ENCODE measurements at regions of chr11 and their contacts with region 1.

Region 1: GRCh38 chr11:96389720-96390487 is at the starts of genes CCDC82 and JRKL:
- DNase-seq: peak; percentile 91
- ATAC-seq: peak; percentile 97
- H3K4me3 ChIP-seq: peak within 1 kb of the TSS; percentile 79 to 81 (median 80)
- H3K27ac ChIP-seq: peak within 1 kb of the TSS; percentile 78
- H3K4me1 ChIP-seq: peaks cover 51% of the 10 kb centered on the region
- H3K27me3 ChIP-seq: no peaks in the 10 kb centered on the region
- CTCF ChIP-seq: 0 out of 2 replicates have a peak, but pooled peaks have one; percentile 9
- EP300 ChIP-seq: 0 out of 4 replicates have a peak, but pooled peaks of 1 of the 2 experiments have one; percentile 36
- POLR2A ChIP-seq: peak; percentile 58 to 83
- RAD21 ChIP-seq: 0 out of 2 replicates have a peak, but pooled peaks have one; percentile 33
- total RNA-seq, gene CCDC82: 19.7 and 23.5 TPM in 2 replicates
- total RNA-seq, gene JRKL: 4.5 and 8.6 TPM in 2 replicates

Region 2: DNA sequence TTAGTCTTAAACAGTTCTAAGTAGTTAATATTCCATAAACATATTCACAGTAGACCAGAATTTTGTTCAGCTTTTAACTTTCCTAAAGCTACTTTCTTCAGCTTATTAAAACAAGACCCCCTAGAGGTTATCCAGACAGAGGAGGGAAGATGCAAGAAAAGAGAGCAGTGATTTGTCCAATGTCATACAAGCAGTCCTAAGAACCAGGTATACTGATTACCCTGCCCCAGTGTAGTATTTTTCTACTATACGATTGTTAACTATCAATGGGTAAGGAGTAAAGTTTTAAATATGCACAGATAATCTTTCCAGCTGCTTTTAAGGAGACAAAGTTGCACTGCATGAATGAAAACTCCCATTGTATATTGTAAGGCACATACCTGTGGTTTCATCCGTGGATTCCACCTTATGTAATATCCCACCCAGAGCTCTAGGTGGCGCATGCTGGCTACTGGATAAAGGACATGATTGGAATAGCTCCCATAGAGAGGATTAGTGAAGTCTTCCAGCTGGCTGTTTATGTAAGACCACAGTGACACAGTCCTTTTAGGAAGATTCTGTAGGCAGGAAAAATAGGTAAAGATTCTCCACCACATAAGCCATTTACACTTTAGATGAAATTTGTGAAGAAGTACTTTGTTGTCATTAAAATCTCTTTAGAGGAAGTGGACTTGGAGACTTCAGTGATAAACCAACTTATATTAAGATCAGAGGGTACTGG is 554.0 kb before region 1 on chr11:
- CTCF ChIA-PET with region 1: interaction called, 13 read pairs
- POLR2A ChIA-PET with region 1: interaction called, 3 read pairs
- in situ Hi-C with region 1: loop called (anchors 10 kb)
- intact Hi-C with region 1: loop called (anchors 1 kb)
- DNase-seq: peak; percentile 84
- ATAC-seq: peak; percentile 99
- H3K4me3 ChIP-seq: no peak overlapping the region
- H3K27ac ChIP-seq: no peak overlapping the region
- H3K4me1 ChIP-seq: no peaks in the 10 kb centered on the region
- H3K27me3 ChIP-seq: no peaks in the 10 kb centered on the region
- CTCF ChIP-seq: peak; percentile 88
- EP300 ChIP-seq: peak in 1 of 2 experiments; percentile 5; a peak in 1 of 4 replicates
- POLR2A ChIP-seq: no peak
- RAD21 ChIP-seq: peak; percentile 76

Region 3: GRCh38 chr11:96012086-96012824 is 377.6 kb before region 1 on chr11:
- CTCF ChIA-PET with region 1: interaction called, 3 read pairs
- POLR2A ChIA-PET with region 1: interaction called, 4 read pairs
- in situ Hi-C with region 1: no loop called
- intact Hi-C with region 1: loop called (anchors 1 kb)
- DNase-seq: peak; percentile 99
- ATAC-seq: peak; percentile 91
- H3K4me3 ChIP-seq: no peak overlapping the region
- H3K27ac ChIP-seq: peak overlapping the region; percentile 97
- H3K4me1 ChIP-seq: peaks cover 80% of the 10 kb centered on the region
- H3K27me3 ChIP-seq: no peaks in the 10 kb centered on the region
- CTCF ChIP-seq: peak; percentile 92
- EP300 ChIP-seq: peak; percentile 87 to 95; a peak in 3 of 4 replicates
- POLR2A ChIP-seq: peak; percentile 32 to 56; a peak in 2 of 4 replicates
- RAD21 ChIP-seq: peak; percentile 88

Region 4: GRCh38 chr11:96091476-96091875 is 298.4 kb before region 1 on chr11:
- CTCF ChIA-PET with region 1: no interaction called
- POLR2A ChIA-PET with region 1: interaction called, 3 read pairs
- in situ Hi-C with region 1: no loop called
- intact Hi-C with region 1: loop called (anchors 1 kb)
- DNase-seq: peak; percentile 18
- ATAC-seq: peak; percentile 53
- H3K4me3 ChIP-seq: no peak overlapping the region
- H3K27ac ChIP-seq: peak overlapping the region; percentile 47
- H3K4me1 ChIP-seq: peaks cover 43% of the 10 kb centered on the region
- H3K27me3 ChIP-seq: no peaks in the 10 kb centered on the region
- CTCF ChIP-seq: peak; percentile 14; the same call in 1 of the 2 replicates
- EP300 ChIP-seq: no peak
- POLR2A ChIP-seq: no peak
- RAD21 ChIP-seq: no peak

Region 5: DNA sequence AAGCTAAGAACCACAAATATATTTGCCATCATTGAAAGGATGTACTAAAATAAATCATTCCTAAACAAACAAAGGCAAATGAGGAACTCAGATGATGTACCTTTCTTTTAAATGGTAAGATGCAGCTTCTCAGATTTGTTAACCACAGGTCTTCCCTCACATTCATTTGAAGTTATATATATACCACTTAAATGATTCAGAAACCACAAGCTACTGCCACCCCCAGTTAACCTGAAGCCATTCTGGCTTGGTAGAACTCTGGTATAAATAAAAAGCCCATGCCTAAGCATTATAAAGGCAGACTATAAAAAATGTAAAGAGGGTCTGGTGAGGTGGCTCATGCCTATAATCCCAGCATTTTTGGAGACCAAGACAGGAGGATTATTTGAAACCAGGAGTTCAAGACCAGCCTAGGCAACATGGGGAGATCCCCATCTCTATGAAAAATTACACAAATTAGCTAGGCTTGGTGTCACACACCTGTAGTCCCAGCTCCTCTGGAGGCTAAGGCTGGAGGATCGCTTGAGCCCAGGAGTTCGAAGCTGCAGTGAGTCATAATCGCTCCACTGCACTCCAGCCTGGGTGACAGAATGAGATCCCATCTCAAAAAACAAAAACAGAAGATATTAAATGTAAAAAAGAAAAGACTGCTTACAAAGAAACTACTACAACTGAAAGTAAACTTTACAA is 1185.2 kb after region 1 on chr11:
- CTCF ChIA-PET with region 1: no interaction called
- POLR2A ChIA-PET with region 1: no interaction called
- in situ Hi-C with region 1: no loop called
- intact Hi-C with region 1: no loop called
- DNase-seq: no peak
- ATAC-seq: no peak
- H3K4me3 ChIP-seq: no peak overlapping the region
- H3K27ac ChIP-seq: no peak overlapping the region
- H3K4me1 ChIP-seq: no peaks in the 10 kb centered on the region
- H3K27me3 ChIP-seq: no peaks in the 10 kb centered on the region
- CTCF ChIP-seq: no peak
- EP300 ChIP-seq: no peak
- POLR2A ChIP-seq: no peak
- RAD21 ChIP-seq: no peak

Measured in HepG2 (cell line).